Heart right ventricle (tissue), 16 donors: ENCODE measurements at regions of chr12 and their contacts with region 1.

Region 1: GRCh38 chr12:108514973-108515814 is at the start of gene FICD:
- DNase-seq: peak; percentile 100
- ATAC-seq: peak; percentile 93 to 98 (median 97)
- H3K4me3 ChIP-seq: peak within 1 kb of the TSS; percentile 65 to 96 (median 79)
- H3K27ac ChIP-seq: peak within 1 kb of the TSS in 9 of 10 donors; percentile 19 to 92 (median 73)
- H3K4me1 ChIP-seq: peaks cover 0 to 29% (median 16%) of the 10 kb centered on the region in 9 donors
- H3K27me3 ChIP-seq: peaks cover 0 to 2% (median 0%) of the 10 kb centered on the region in 7 donors
- CTCF ChIP-seq: no peak
- total RNA-seq, gene FICD: 2.1 to 4.4 (median 2.8) TPM

Region 2: DNA sequence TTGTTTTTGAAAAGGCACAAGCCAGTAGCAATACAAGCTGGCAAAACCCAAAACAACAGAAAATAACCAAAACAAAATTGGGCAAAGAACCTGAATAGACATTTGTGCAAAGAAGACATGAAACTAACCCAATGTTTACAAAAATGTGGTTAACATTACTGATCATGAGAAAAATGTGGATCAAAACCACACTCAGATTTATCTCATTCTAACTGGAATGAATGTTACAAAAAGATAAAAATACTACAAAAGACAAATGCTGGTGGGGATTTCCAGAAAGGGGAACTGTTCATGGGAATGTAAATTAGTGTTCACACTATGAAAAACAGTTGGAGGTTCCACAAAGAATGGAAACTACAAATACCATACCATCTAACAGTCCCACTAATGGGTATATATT is 714.0 kb before region 1 on chr12:
- intact Hi-C with region 1: no loop called
- DNase-seq: no peak
- ATAC-seq: no peak
- H3K4me3 ChIP-seq: no peak overlapping the region
- H3K27ac ChIP-seq: no peak overlapping the region
- H3K4me1 ChIP-seq: peaks cover 0 to 7% (median 0%) of the 10 kb centered on the region in 9 donors
- H3K27me3 ChIP-seq: peaks cover 0 to 27% (median 13%) of the 10 kb centered on the region in 7 donors
- CTCF ChIP-seq: no peak

Region 3: DNA sequence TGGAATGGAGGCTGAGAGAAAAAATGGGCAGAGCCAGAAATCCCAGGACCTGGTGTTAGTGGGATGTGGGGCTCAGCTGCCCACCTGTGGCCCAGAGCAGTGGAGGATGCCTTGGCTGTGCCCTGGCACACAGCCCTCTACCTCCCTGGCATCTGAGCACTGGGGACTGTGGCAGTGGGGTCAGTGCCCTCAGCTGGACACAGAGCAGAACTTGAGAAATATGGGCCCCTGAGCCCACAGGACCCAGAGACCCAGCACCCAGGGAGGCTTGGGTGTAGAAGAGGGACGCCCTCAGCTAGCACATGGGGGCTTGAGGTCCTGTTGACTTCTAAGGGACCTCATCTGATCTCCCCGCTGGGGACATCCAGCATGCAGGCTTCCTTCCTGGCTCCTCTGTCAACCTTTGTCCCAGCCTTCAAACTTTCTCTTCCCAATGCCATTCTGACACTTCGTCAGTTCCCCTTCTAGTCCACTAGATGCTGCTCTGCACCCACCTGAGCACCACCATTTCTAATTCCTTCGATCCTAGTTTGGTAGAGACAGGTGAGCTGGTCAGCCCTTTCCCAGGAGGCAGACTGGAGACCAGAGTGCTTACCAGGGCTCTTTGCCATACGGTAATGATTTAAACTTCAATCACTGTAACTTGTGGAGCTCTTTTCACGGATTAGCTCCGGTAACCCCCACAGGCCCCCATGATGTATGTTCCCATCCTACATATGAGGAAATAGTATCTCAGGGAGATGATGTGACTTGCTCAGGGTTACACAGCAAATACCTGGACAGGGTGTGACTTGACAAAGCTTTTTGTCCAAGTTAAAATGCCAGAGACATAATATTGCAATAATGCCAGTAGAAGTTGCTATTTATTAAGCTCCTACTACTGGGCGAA is 597.0 kb before region 1 on chr12:
- intact Hi-C with region 1: loop called in 2 of 10 experiments (anchors 5 kb)
- DNase-seq: no peak
- ATAC-seq: peak in 3 of 8 donors; percentile 44 to 55 (median 51)
- H3K4me3 ChIP-seq: no peak overlapping the region
- H3K27ac ChIP-seq: no peak overlapping the region
- H3K4me1 ChIP-seq: no peaks in the 10 kb centered on the region
- H3K27me3 ChIP-seq: peaks cover 9 to 82% (median 43%) of the 10 kb centered on the region in 7 donors
- CTCF ChIP-seq: peak; percentile 21 to 64 (median 55)

Region 4: DNA sequence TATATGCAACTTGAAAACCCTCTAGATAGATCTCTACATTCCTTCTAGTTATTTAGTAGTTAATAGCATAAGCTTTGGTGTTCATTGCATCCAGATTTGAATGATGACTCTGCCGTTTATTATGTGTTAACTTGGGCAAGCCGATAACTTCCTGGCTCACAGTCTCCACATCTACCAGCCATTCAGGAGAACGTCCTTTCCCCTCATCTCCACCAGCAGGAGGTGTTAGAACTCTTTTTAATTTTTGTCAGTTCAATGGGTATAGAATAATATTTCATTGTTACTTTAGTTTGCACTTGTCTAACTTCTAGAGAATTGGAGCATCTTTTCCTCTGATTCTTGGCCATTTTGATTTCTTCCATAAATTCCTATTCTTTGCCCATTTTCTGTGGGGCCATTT is 416.1 kb before region 1 on chr12:
- intact Hi-C with region 1: loop called in 1 of 10 experiments (anchors 5 kb)
- DNase-seq: no peak
- ATAC-seq: no peak
- H3K4me3 ChIP-seq: no peak overlapping the region
- H3K27ac ChIP-seq: no peak overlapping the region
- H3K4me1 ChIP-seq: no peaks in the 10 kb centered on the region
- H3K27me3 ChIP-seq: peaks cover 0 to 52% (median 31%) of the 10 kb centered on the region in 7 donors
- CTCF ChIP-seq: peak in 8 of 9 donors; percentile 12 to 56 (median 39)

Region 5: GRCh38 chr12:108156717-108157116 is 358.5 kb before region 1 on chr12:
- intact Hi-C with region 1: no loop called
- DNase-seq: no peak
- ATAC-seq: peak in 3 of 8 donors; percentile 53 to 76 (median 73)
- H3K4me3 ChIP-seq: no peak overlapping the region
- H3K27ac ChIP-seq: no peak overlapping the region
- H3K4me1 ChIP-seq: peaks cover 0 to 6% (median 0%) of the 10 kb centered on the region in 9 donors
- H3K27me3 ChIP-seq: peaks cover 0 to 32% (median 0%) of the 10 kb centered on the region in 7 donors
- CTCF ChIP-seq: no peak